Transverse colon (tissue), 4 donors: ENCODE measurements at regions of chr7 and their contacts with region 1.

Region 1: GRCh38 chr7:136009488-136010079 is 32.4 kb upstream of the MTPN start:
- DNase-seq: no peak
- H3K4me3 ChIP-seq: no peak overlapping the region
- H3K27ac ChIP-seq: no peak overlapping the region
- H3K4me1 ChIP-seq: no peaks in the 10 kb centered on the region
- H3K27me3 ChIP-seq: no peaks in the 10 kb centered on the region
- CTCF ChIP-seq: peak; percentile 66 to 77 (median 75)
- EP300 ChIP-seq: no peak
- POLR2A ChIP-seq: no peak

Region 2: GRCh38 chr7:135662373-135663114 is 347.0 kb before region 1 on chr7 and contains the start of gene STMP1:
- in situ Hi-C with region 1: loop called in 2 of 4 experiments (anchors 25 kb)
- intact Hi-C with region 1: no loop called
- DNase-seq: peak; percentile 98
- H3K4me3 ChIP-seq: peak within 1 kb of the TSS; percentile 71 to 99 (median 98)
- H3K27ac ChIP-seq: peak within 1 kb of the TSS; percentile 91 to 96 (median 95)
- H3K4me1 ChIP-seq: peaks cover 7 to 31% (median 15%) of the 10 kb centered on the region in 4 donors
- H3K27me3 ChIP-seq: no peaks in the 10 kb centered on the region
- CTCF ChIP-seq: peak in 2 of 5 experiments; percentile 5 to 86
- EP300 ChIP-seq: no peak
- POLR2A ChIP-seq: peak; percentile 91
- total RNA-seq, gene STMP1: 3.0 to 21.6 (median 12.0) TPM

Region 3: DNA sequence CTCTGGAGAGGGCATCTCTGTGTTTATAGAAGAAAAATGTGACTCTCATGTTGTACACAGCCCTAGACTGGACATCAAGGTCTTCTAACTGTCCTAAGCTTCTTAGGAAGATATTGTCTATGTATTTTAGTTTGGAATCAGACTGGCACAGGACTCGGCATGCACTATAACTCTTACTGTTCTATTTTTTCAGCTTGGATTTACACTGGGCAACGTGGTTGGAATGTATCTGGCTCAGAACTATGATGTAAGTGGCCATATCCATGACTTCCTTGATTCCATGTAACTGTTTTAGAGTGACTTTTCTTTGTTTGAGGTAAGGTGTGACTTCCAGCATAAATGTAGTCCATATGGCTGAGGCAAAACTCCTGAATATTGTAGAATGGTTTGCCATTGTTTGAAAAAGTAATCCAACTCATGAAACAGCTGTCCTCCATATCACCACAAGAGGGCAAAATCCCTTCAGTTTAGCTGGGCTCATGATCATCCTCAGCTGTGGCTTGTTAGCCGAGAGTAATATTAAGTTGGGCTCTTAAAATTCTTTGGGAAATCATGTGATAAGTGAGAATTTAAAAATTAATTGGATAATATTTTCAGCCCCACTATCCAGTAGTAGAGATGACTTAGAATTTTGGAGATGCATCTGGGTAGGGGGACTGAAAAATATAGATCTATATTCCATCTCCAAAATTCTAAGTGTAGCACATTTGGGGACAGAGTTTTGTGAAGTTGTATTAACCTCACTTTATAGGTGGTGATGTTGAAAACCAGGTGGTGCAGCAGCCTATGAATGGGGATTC is 336.8 kb before region 1 on chr7:
- in situ Hi-C with region 1: loop called in 3 of 4 experiments (anchors 10 to 25 kb)
- intact Hi-C with region 1: no loop called
- DNase-seq: no peak
- H3K4me3 ChIP-seq: no peak overlapping the region
- H3K27ac ChIP-seq: peak overlapping the region in 2 of 4 donors; percentile 3 to 10
- H3K4me1 ChIP-seq: peaks cover 0 to 14% (median 8%) of the 10 kb centered on the region in 4 donors
- H3K27me3 ChIP-seq: no peaks in the 10 kb centered on the region
- CTCF ChIP-seq: peak; percentile 63 to 70 (median 68)
- EP300 ChIP-seq: no peak
- POLR2A ChIP-seq: no peak

Region 4: DNA sequence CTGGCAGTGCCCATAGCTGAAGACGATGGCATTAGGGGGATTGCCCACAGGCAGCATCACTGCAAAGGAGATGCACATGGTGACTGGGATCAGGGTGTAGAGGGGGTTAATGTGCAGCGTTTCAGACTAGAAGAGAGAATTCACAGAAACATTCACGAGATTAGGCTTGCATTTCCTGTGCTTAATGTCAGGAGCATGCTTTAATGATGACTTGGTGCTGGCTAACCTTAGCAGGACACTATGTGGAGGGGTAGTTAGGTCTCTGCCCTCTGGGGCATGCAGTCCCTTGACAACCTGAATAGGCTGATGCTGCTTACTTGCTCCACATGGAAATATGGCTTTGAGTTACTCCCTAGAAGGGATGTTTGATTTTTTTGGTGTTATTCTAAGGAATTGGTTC is 325.4 kb before region 1 on chr7:
- in situ Hi-C with region 1: loop called in 1 of 4 experiments (anchors 10 kb)
- intact Hi-C with region 1: loop called (anchors 10 kb)
- DNase-seq: no peak
- H3K4me3 ChIP-seq: no peak overlapping the region
- H3K27ac ChIP-seq: no peak overlapping the region
- H3K4me1 ChIP-seq: no peaks in the 10 kb centered on the region
- H3K27me3 ChIP-seq: no peaks in the 10 kb centered on the region
- CTCF ChIP-seq: no peak
- EP300 ChIP-seq: no peak
- POLR2A ChIP-seq: no peak

Region 5: DNA sequence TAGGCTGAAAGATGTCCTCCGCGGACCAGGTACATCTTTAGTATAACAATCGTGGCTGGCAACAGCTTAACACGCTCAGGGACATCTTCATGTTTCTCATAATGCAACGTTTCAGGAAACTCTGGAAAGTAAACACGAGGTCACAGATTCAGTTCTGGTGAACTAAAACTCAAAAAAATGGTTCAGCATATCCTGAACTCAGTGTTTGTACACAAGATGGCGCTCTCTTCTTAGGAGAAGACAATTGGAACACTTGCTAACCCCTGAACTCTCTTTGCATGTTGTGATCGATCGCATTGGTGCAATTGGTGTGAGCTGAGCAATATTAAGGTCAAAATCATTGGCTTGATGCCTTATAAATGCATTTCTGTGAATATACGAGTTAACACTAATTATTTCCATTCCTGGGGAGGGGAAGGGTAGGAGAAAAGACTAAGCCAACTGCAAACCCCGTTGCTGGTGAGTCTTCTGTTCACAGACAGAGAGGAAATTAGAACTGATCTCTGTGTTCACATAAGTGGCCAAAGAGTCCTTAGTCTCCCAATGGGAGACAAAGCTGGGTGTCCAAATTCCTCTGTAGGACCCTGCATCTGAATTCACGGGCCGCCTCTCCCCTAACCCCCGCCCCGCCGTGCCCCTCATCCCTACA is 208.4 kb before region 1 on chr7:
- in situ Hi-C with region 1: loop called (anchors 5 to 10 kb)
- intact Hi-C with region 1: loop called (anchors 2 kb)
- DNase-seq: no peak
- H3K4me3 ChIP-seq: no peak overlapping the region
- H3K27ac ChIP-seq: no peak overlapping the region
- H3K4me1 ChIP-seq: peaks cover 0 to 12% (median 0%) of the 10 kb centered on the region in 4 donors
- H3K27me3 ChIP-seq: no peaks in the 10 kb centered on the region
- CTCF ChIP-seq: peak; percentile 73 to 81 (median 76)
- EP300 ChIP-seq: no peak
- POLR2A ChIP-seq: no peak